Psoas muscle (tissue), 8 donors: ENCODE measurements at regions of chr19 and their contacts with region 1.

Region 1: DNA sequence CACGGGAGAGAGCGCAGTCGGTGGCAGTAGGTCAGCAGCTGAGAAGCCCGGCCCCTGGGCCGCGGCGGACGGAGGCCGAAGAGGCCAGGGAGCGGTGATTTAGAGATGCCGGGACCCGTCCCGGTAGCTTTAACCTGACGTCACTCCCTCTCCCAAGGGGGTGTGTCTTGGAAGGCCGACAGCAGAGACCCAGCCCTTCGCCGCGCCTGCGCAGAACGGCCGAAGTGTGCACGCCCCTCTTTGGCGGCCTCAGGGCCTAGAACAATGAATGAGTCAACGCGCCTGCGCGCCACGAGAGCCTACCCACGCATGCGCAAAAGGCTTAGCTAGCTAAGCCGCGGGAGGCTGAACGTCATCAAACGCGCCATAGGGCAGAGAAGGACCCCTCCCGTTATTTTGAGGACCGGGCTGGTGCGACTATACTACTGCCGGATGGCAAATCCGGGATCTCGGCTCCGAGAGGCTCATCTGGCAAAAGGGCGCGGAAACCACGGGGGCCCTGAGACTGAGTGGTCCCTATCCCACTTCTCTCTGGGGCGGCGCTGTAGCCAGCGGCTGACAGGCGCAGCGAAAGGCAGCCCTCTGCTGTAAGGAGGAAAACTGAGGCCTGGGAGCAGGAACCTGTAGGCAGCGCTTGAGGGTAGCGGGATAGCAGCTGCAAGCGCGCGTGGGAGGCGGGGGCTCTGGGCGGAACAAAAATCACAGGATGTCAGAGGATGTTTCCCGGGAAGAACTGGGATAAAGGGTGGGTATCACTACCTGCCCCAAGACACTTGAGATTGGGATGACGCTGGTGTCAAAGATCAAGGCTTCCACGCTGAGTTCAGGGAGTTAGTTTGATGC is at the starts of genes IRGQ and ZNF576:
- DNase-seq: peak; percentile 100
- ATAC-seq: peak; percentile 93 to 94 (median 94)
- H3K4me3 ChIP-seq: peak within 1 kb of the TSS; percentile 89
- H3K27ac ChIP-seq: peak within 1 kb of the TSS; percentile 99
- H3K4me1 ChIP-seq: peaks cover 26% of the 10 kb centered on the region
- H3K27me3 ChIP-seq: no peaks in the 10 kb centered on the region
- CTCF ChIP-seq: no peak
- total RNA-seq, gene IRGQ: 16.3 to 26.9 (median 22.4) TPM
- total RNA-seq, gene ZNF576: 10.3 to 16.2 (median 15.9) TPM

Region 2: GRCh38 chr19:43532962-43533545 is 63.2 kb before region 1 on chr19 and contains the start of gene ZNF575:
- intact Hi-C with region 1: loop called (anchors 5 to 10 kb)
- DNase-seq: peak; percentile 86 to 92
- ATAC-seq: peak; percentile 64 to 77 (median 68)
- H3K4me3 ChIP-seq: peak within 1 kb of the TSS; percentile 76
- H3K27ac ChIP-seq: peak within 1 kb of the TSS; percentile 75
- H3K4me1 ChIP-seq: no peaks in the 10 kb centered on the region
- H3K27me3 ChIP-seq: no peaks in the 10 kb centered on the region
- CTCF ChIP-seq: no peak
- total RNA-seq, gene ZNF575: 0.40 to 1.6 (median 1.2) TPM

Region 3: GRCh38 chr19:43575955-43576878 is 20.0 kb before region 1 on chr19:
- intact Hi-C with region 1: loop called (anchors 2 kb)
- DNase-seq: no peak
- ATAC-seq: peak in 3 of 4 donors; percentile 2 to 16 (median 7)
- H3K4me3 ChIP-seq: peak overlapping the region; percentile 97
- H3K27ac ChIP-seq: peak overlapping the region; percentile 86
- H3K4me1 ChIP-seq: peaks cover 12% of the 10 kb centered on the region
- H3K27me3 ChIP-seq: no peaks in the 10 kb centered on the region
- CTCF ChIP-seq: no peak

Region 4: GRCh38 chr19:44021221-44021620 is 425.0 kb after region 1 on chr19:
- intact Hi-C with region 1: no loop called
- DNase-seq: no peak
- ATAC-seq: no peak
- H3K4me3 ChIP-seq: no peak overlapping the region
- H3K27ac ChIP-seq: no peak overlapping the region
- H3K4me1 ChIP-seq: no peaks in the 10 kb centered on the region
- H3K27me3 ChIP-seq: peaks cover 0 to 2% (median 0%) of the 10 kb centered on the region in 3 donors
- CTCF ChIP-seq: no peak